ENCODE measurements at regions of chr4 and their contacts with region 1.

Region 1: DNA sequence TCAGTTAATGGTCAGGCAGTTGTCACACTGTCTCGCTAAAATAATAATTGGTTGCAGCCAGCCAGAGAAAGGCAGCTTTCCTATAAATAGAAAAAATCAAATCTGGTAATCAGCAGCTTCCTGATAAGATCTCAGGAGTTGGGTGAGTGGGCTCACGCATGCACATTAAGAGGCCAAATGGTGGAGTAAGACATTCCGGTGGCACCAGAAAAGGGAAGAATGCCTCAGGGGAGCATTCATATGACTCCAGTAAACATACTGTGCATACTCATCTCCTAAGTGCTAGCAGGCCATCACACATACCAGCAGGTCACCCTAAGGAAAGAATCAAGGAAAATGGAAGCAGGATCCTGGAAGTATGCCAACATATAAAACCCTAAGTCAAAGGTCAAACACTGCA is 40.1 kb downstream of the UGT2B15 start:
- DNase-seq: no peak
- ATAC-seq: no peak
- H3K4me3 ChIP-seq: no peak overlapping the region
- H3K27ac ChIP-seq: no peak overlapping the region
- H3K4me1 ChIP-seq: no peaks in the 10 kb centered on the region
- H3K27me3 ChIP-seq: no peaks in the 10 kb centered on the region
- CTCF ChIP-seq: no peak
- POLR2A ChIP-seq: no peak
- RAD21 ChIP-seq: no peak

Region 2: DNA sequence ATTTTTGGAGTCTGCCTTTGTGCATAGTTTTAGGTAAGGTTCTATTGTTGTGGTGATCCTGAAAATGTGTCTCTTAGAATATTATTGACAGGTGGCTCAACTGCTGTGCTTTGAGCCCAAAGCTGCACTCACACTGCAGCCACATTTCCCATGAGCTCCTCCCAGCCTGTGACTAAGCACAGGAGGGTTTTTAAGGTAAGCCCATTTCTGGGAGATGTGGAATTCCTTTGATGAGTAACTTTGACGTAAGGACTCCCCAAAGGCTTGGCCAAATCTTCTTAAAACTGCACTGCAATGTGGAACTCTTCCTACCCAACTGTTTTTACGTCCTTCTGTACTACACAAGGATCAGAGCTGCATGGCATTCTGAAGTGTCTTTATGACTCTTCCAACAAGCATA is 647.0 kb before region 1 on chr4:
- CTCF ChIA-PET with region 1: no interaction called
- POLR2A ChIA-PET with region 1: no interaction called
- dilution Hi-C with region 1: no loop called
- in situ Hi-C with region 1: loop called (anchors 25 kb)
- intact Hi-C with region 1: no loop called
- DNase-seq: no peak
- ATAC-seq: no peak
- H3K4me3 ChIP-seq: no peak overlapping the region
- H3K27ac ChIP-seq: no peak overlapping the region
- H3K4me1 ChIP-seq: no peaks in the 10 kb centered on the region
- H3K27me3 ChIP-seq: no peaks in the 10 kb centered on the region
- CTCF ChIP-seq: no peak
- POLR2A ChIP-seq: no peak
- RAD21 ChIP-seq: no peak

Region 3: GRCh38 chr4:68476191-68476590 is 154.2 kb before region 1 on chr4:
- CTCF ChIA-PET with region 1: no interaction called
- POLR2A ChIA-PET with region 1: no interaction called
- dilution Hi-C with region 1: no loop called
- in situ Hi-C with region 1: no loop called
- intact Hi-C with region 1: no loop called
- DNase-seq: no peak
- ATAC-seq: no peak
- H3K4me3 ChIP-seq: no peak overlapping the region
- H3K27ac ChIP-seq: no peak overlapping the region
- H3K4me1 ChIP-seq: no peaks in the 10 kb centered on the region
- H3K27me3 ChIP-seq: no peaks in the 10 kb centered on the region
- CTCF ChIP-seq: no peak
- POLR2A ChIP-seq: no peak
- RAD21 ChIP-seq: no peak

Region 4: GRCh38 chr4:68518889-68519288 is 111.5 kb before region 1 on chr4:
- CTCF ChIA-PET with region 1: no interaction called
- POLR2A ChIA-PET with region 1: no interaction called
- dilution Hi-C with region 1: no loop called
- in situ Hi-C with region 1: loop called (anchors 25 kb)
- intact Hi-C with region 1: no loop called
- DNase-seq: no peak
- ATAC-seq: no peak
- H3K4me3 ChIP-seq: no peak overlapping the region
- H3K27ac ChIP-seq: no peak overlapping the region
- H3K4me1 ChIP-seq: no peaks in the 10 kb centered on the region
- H3K27me3 ChIP-seq: no peaks in the 10 kb centered on the region
- CTCF ChIP-seq: no peak
- POLR2A ChIP-seq: no peak
- RAD21 ChIP-seq: no peak

Region 5: GRCh38 chr4:69126024-69126423 is 495.7 kb after region 1 on chr4:
- CTCF ChIA-PET with region 1: no interaction called
- POLR2A ChIA-PET with region 1: no interaction called
- dilution Hi-C with region 1: no loop called
- in situ Hi-C with region 1: loop called (anchors 25 kb)
- intact Hi-C with region 1: no loop called
- DNase-seq: no peak
- ATAC-seq: no peak
- H3K4me3 ChIP-seq: no peak overlapping the region
- H3K27ac ChIP-seq: no peak overlapping the region
- H3K4me1 ChIP-seq: no peaks in the 10 kb centered on the region
- H3K27me3 ChIP-seq: no peaks in the 10 kb centered on the region
- CTCF ChIP-seq: no peak
- POLR2A ChIP-seq: no peak
- RAD21 ChIP-seq: no peak